ENCODE measurements at regions of chr14 and their contacts with region 1.

Region 1: DNA sequence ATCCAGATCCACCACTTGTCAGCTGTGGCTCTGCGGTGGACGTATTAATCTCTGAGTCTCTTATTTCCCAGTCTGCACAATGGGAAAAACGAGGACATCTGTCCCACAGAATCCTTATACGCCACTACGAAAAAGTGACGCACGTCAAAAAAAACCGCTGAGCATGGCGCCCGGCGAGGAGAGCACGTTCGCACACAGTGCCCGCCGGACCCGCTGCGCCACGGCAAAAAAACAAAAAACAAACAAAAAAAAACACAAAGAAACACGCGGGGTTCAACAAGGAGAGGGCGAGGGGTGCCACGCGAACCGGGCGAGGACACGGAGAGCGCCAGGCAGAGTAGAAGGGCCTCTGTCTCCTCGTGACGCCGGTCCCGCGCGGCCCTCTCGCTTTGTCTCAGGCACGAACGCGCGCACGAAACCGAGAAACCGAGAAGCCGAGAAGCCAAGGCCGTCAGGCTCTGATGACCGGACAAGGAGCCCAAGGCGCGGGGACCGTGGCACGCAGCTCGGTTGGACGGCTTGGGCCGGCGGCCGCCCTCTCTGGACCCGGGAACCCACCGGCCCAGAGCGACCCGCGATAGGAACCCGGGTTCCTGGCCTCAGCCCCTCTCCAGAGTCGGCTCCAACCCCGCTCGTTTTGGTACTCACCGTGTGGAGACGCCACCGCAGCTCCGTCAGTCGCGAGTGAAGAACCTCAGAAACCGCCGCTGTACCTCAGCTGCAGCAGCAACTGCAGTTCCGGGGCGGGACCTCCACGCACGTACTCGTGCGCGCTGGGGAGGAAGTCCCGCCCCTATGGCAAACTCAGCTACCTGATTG is at the start of gene DDX24:
- DNase-seq: peak; percentile 85
- ATAC-seq: peak; percentile 98
- H3K4me3 ChIP-seq: peak within 1 kb of the TSS; percentile 75 to 99 (median 99)
- H3K27ac ChIP-seq: peak within 1 kb of the TSS; percentile 81
- H3K4me1 ChIP-seq: peaks cover 61% of the 10 kb centered on the region
- H3K27me3 ChIP-seq: no peaks in the 10 kb centered on the region
- CTCF ChIP-seq: no peak
- EP300 ChIP-seq: no peak
- POLR2A ChIP-seq: peak; percentile 83 to 89
- RAD21 ChIP-seq: no peak
- total RNA-seq, gene DDX24: 149 and 215 TPM in 2 replicates

Region 2: DNA sequence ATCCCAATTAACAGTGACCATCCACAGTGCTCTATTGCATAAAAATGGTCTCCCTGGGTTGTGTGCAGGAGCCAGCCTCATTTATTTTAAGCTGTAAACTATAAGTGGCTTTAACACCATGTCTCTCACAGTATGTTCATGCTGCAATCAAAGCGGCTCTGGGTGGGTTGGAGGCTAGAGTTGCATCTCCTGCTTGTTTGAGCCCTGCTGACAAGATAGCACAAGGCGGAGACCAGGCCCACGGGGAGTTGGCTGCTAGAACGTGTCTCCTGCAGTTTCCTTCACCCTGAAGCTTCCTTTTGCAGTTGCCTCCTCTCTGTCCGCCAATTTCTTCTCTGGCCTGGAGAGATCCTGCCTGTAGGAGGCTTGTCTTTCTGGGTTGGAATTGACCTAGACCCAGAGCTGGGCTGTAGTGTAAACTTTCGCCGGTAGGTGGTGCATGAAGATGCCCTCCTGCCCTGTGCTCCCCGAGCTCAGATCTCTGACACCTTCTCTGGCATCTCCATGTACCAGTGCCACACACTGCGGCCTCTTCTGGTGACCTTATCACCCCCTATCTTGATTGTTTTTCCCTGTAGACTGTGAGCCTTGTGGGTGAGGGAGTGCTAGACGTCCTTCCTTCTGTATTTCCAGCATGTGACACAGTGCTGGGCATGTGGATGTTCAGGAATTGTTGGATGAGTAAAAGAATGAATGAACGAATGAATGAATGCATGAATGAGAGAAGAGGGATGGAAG is 44.2 kb before region 1 on chr14:
- CTCF ChIA-PET with region 1: no interaction called
- POLR2A ChIA-PET with region 1: interaction called, 4 read pairs
- in situ Hi-C with region 1: no loop called
- intact Hi-C with region 1: loop called (anchors 5 kb)
- DNase-seq: peak; percentile 73
- ATAC-seq: peak; percentile 90
- H3K4me3 ChIP-seq: no peak overlapping the region
- H3K27ac ChIP-seq: no peak overlapping the region
- H3K4me1 ChIP-seq: peaks cover 43% of the 10 kb centered on the region
- H3K27me3 ChIP-seq: no peaks in the 10 kb centered on the region
- CTCF ChIP-seq: peak; percentile 91
- EP300 ChIP-seq: no peak
- POLR2A ChIP-seq: no peak
- RAD21 ChIP-seq: peak; percentile 77

Region 3: GRCh38 chr14:94066089-94066676 is 14.5 kb before region 1 on chr14:
- CTCF ChIA-PET with region 1: no interaction called
- POLR2A ChIA-PET with region 1: interaction called, 10 read pairs
- in situ Hi-C with region 1: no loop called
- intact Hi-C with region 1: no loop called
- DNase-seq: peak; percentile 38
- ATAC-seq: peak; percentile 71
- H3K4me3 ChIP-seq: no peak overlapping the region
- H3K27ac ChIP-seq: peak overlapping the region; percentile 50
- H3K4me1 ChIP-seq: peaks cover 33% of the 10 kb centered on the region
- H3K27me3 ChIP-seq: no peaks in the 10 kb centered on the region
- CTCF ChIP-seq: 0 out of 2 replicates have a peak, but pooled peaks have one; percentile 22
- EP300 ChIP-seq: no peak
- POLR2A ChIP-seq: no peak
- RAD21 ChIP-seq: no peak

Region 4: GRCh38 chr14:94129111-94129757 is 48.6 kb after region 1 on chr14 and contains the start of gene IFI27L2:
- CTCF ChIA-PET with region 1: no interaction called
- POLR2A ChIA-PET with region 1: no interaction called
- in situ Hi-C with region 1: no loop called
- intact Hi-C with region 1: loop called (anchors 5 kb)
- DNase-seq: peak; percentile 40
- ATAC-seq: peak; percentile 84
- H3K4me3 ChIP-seq: peak within 1 kb of the TSS; percentile 46 to 72 (median 53)
- H3K27ac ChIP-seq: no peak within 1 kb of the TSS
- H3K4me1 ChIP-seq: peaks cover 23% of the 10 kb centered on the region
- H3K27me3 ChIP-seq: peaks cover 2 to 17% of the 10 kb centered on the region in 2 experiments
- CTCF ChIP-seq: 0 out of 2 replicates have a peak, but pooled peaks have one; percentile 9
- EP300 ChIP-seq: no peak
- POLR2A ChIP-seq: no peak
- RAD21 ChIP-seq: no peak
- total RNA-seq, gene IFI27L2: 4.3 and 6.0 TPM in 2 replicates

Measured in HepG2 (cell line).